IMR-90 (cell line): ENCODE measurements at regions of chr4 and their contacts with region 1.

Region 1: GRCh38 chr4:67684839-67685531 is 16.0 kb downstream of the UBA6 start:
- DNase-seq: peak; percentile 66
- ATAC-seq: peak; percentile 27; the same call in 1 of the 2 replicates
- H3K4me3 ChIP-seq: no peak overlapping the region
- H3K27ac ChIP-seq: no peak overlapping the region
- H3K4me1 ChIP-seq: peaks cover 7% of the 10 kb centered on the region
- H3K27me3 ChIP-seq: no peaks in the 10 kb centered on the region
- CTCF ChIP-seq: no peak
- POLR2A ChIP-seq: no peak
- RAD21 ChIP-seq: no peak

Region 2: GRCh38 chr4:68109868-68110267 is 424.9 kb after region 1 on chr4:
- CTCF ChIA-PET with region 1: no interaction called
- POLR2A ChIA-PET with region 1: no interaction called
- dilution Hi-C with region 1: no loop called
- in situ Hi-C with region 1: no loop called
- intact Hi-C with region 1: no loop called
- DNase-seq: no peak
- ATAC-seq: no peak
- H3K4me3 ChIP-seq: no peak overlapping the region
- H3K27ac ChIP-seq: no peak overlapping the region
- H3K4me1 ChIP-seq: no peaks in the 10 kb centered on the region
- H3K27me3 ChIP-seq: no peaks in the 10 kb centered on the region
- CTCF ChIP-seq: no peak
- POLR2A ChIP-seq: no peak
- RAD21 ChIP-seq: no peak

Region 3: DNA sequence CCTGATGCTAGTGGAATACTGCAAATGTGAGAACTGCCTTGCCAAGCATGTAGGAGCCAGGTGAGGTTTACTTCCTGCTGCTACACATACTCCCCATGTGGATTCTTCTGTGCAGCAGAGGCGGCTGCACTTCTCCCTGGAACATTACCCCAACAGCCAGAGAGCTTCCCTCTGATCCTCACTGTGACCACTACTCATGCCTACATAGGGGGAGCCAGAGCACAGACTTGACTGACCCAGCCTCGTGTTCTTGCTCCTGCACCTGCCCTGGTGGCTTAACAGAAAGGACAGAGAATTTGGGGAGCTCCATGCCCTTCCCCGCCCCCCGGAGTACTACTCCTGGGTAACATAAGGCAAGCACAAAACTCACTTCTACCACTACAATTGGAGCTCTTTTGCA is 1916.1 kb after region 1 on chr4:
- CTCF ChIA-PET with region 1: no interaction called
- POLR2A ChIA-PET with region 1: no interaction called
- dilution Hi-C with region 1: no loop called
- in situ Hi-C with region 1: no loop called
- intact Hi-C with region 1: loop called (anchors 5 kb)
- DNase-seq: no peak
- ATAC-seq: no peak
- H3K4me3 ChIP-seq: no peak overlapping the region
- H3K27ac ChIP-seq: no peak overlapping the region
- H3K4me1 ChIP-seq: no peaks in the 10 kb centered on the region
- H3K27me3 ChIP-seq: no peaks in the 10 kb centered on the region
- CTCF ChIP-seq: no peak
- POLR2A ChIP-seq: no peak
- RAD21 ChIP-seq: no peak